Left cardiac atrium (tissue), 4 donors: ENCODE measurements at regions of chr18 and their contacts with region 1.

Region 1: GRCh38 chr18:9575558-9575957 is 38.8 kb downstream of the PPP4R1 start:
- DNase-seq: peak; percentile 79
- ATAC-seq: peak; percentile 97 to 98

Region 2: DNA sequence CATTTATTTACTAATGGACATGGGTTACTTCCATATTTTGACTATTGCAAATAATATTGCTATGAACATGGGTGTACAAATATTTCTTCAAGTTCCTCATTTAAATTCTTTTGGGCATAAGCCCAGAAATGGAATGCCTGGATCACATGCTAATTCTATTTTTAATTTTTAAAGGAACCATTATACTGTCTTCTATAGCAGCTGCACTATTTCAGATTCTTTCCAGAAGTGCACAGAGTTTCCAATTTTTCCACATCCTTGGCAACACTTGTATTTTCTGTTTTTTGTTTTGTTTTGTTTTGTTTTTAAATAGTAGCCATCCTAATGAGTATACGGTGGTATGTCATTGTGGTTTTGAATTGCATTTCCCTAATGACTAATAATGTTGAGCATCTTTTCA is 108.7 kb before region 1 on chr18:
- intact Hi-C with region 1: no loop called
- DNase-seq: no peak
- ATAC-seq: no peak

Region 3: DNA sequence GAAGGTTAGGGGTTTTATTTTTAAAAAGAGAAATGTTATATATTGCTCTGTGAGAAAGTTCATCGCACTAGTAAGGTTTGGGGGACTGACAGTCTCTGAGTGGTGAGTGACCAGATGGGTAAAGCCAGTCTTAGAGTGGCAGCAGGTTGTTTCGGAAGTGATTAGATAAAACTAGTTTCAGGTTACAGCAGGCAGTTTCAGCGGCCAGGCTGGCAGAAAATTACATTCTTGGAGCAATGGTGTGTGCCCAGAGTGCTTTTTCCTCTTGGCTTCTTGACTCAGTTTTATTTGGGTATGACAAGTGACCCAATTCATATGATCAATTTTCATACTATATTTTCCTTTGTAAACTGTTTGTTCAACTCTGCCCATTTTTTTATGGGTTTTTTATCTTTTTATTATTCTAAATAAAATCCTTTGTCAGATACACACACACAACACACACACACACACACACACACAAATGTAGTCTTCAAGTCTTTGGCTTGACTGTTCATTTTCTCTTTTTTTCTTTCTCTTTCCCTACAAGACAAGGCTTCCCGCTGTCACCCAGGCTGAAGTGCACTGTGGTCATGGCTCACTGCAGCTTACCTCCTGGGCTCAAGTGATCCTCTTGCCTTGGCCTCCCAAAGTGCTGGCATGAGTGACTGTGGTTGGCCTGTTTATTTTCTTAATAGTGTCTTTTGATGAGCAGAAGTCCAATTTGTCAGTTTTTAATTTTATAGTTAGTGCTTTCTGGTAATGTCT is 69.3 kb before region 1 on chr18:
- intact Hi-C with region 1: no loop called
- DNase-seq: no peak
- ATAC-seq: peak; percentile 66 to 83

Region 4: GRCh38 chr18:9673296-9674251 is 98.0 kb after region 1 on chr18:
- intact Hi-C with region 1: loop called in 1 of 2 experiments (anchors 5 kb)
- DNase-seq: no peak
- ATAC-seq: peak; percentile 82 to 95

Region 5: DNA sequence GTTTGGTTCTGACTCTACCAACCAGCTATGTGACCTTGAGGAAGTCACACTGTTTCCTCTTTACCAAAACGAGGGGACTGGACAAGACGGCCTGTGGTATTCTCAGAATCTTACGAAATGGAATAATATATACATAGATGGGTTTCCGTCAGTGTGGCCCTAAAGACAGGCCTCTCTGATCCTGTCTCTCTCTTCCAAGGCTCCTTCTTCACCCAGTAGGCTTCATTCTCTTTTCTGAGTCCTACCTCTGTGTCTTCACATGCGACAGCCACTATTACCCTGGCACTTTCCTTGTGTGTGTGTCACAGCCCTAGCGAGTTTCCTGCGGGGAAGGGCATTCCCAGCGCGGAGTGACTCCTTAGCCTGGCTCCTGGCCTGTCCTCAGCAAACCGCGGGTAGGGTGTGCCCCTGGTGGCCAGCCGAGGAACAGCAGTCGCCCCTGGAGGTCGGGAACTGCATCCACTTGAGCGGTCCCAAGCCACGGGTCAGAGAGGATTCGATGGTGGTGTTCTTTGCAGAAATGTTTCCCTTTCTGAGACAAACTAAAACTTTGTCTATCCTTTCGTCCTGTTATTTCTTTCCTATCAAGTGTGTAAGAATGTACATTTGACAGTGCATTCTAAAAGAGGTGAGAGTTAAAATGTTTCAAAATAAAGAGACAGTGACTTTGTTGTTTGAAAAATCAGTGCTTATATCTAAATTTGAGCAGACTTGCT is 195.9 kb after region 1 on chr18:
- intact Hi-C with region 1: loop called in 1 of 2 experiments (anchors 5 kb)
- DNase-seq: peak; percentile 88
- ATAC-seq: peak; percentile 93 to 96

Region 6: DNA sequence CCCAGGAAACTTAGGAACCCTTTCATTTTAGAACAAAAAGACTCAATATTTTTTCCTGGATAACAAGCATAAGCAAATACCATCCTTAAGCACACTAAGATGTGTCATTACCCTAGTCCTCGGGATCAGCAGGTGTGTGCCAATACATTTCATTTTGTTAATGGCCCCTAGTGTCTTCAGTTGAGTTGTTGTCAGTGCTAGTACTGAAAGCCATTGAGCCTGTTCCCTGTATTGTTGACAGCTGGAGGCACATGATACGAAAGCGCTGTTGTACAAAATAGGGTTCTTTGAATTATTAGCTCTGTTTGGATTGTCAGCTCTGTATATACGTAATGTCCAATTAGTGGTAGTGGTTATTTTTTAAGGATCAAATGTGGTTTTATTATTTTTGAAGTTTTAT is 367.8 kb after region 1 on chr18:
- intact Hi-C with region 1: loop called in 1 of 2 experiments (anchors 10 kb)
- DNase-seq: no peak
- ATAC-seq: no peak